Sigmoid colon (tissue), 7 donors: ENCODE measurements at regions of chr5 and their contacts with region 1.

Region 1: GRCh38 chr5:54243473-54244080 is 66.8 kb downstream of the ARL15 start:
- DNase-seq: no peak
- H3K4me3 ChIP-seq: no peak overlapping the region
- H3K27ac ChIP-seq: no peak overlapping the region
- H3K4me1 ChIP-seq: no peaks in the 10 kb centered on the region
- H3K27me3 ChIP-seq: no peaks in the 10 kb centered on the region
- CTCF ChIP-seq: peak in 3 of 4 experiments; percentile 31 to 52 (median 48)
- EP300 ChIP-seq: no peak
- POLR2A ChIP-seq: no peak

Region 2: GRCh38 chr5:54171645-54172384 is 71.8 kb before region 1 on chr5:
- intact Hi-C with region 1: no loop called
- DNase-seq: no peak
- H3K4me3 ChIP-seq: no peak overlapping the region
- H3K27ac ChIP-seq: no peak overlapping the region
- H3K4me1 ChIP-seq: no peaks in the 10 kb centered on the region
- H3K27me3 ChIP-seq: no peaks in the 10 kb centered on the region
- CTCF ChIP-seq: no peak
- EP300 ChIP-seq: no peak
- POLR2A ChIP-seq: no peak

Region 3: GRCh38 chr5:54186912-54187445 is 56.6 kb before region 1 on chr5:
- intact Hi-C with region 1: no loop called
- DNase-seq: no peak
- H3K4me3 ChIP-seq: no peak overlapping the region
- H3K27ac ChIP-seq: no peak overlapping the region
- H3K4me1 ChIP-seq: peaks cover 0 to 19% (median 0%) of the 10 kb centered on the region in 4 donors
- H3K27me3 ChIP-seq: no peaks in the 10 kb centered on the region
- CTCF ChIP-seq: no peak
- EP300 ChIP-seq: no peak
- POLR2A ChIP-seq: no peak

Region 4: DNA sequence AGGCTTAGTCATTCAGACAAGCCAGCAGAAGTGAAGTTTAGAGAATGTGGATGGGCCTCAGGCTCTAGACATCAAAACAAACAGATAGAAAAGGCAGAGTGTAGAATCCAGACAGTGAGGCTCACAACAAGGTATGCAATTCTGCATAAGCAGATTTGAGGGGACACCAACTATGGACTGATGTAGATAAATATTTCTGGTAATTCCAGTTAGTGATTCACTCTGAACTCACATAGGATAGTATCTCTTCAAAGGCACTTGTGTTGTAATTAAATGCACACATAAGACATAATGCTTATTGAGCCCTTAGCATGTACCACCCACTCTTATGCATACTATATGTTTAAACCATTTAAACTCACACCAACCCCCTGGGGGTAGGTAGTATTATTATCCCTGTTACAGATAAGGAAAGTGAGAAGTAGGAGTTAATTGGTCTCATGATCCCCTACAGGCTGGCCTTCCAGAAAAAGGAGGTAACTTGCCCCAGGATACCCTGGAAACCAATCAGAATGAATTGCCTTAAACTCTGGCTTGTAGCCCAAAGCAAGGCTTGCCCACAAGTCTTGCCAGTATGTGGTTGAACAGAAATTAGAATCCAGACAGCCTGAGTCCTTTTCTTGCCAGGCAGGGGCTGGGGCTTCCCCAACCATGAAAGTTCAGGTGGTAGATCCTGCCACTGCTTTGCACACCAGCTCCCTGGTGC is 172.5 kb after region 1 on chr5:
- intact Hi-C with region 1: loop called (anchors 5 kb)
- DNase-seq: no peak
- H3K4me3 ChIP-seq: no peak overlapping the region
- H3K27ac ChIP-seq: no peak overlapping the region
- H3K4me1 ChIP-seq: no peaks in the 10 kb centered on the region
- H3K27me3 ChIP-seq: no peaks in the 10 kb centered on the region
- CTCF ChIP-seq: no peak
- EP300 ChIP-seq: no peak
- POLR2A ChIP-seq: no peak

Region 5: DNA sequence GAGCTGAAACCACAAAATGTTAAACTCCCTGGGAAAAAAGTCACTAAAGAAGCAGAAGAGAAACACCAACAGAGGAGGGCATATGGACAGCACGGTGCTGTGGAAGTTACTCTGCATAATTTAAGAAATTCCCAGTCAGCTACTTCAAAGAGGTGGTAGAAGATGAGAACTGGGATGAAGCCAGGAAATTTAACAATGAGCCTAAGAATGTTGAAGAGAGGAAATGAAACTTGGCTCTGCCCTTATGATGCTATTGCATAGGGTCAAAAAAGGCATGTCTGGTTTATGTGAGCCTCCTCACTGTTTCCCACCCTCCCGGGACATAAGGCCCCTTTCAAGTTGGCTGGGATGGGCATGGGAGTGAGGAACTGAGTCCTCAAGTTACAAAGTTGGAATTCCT is 248.6 kb after region 1 on chr5:
- intact Hi-C with region 1: loop called (anchors 5 kb)
- DNase-seq: no peak
- H3K4me3 ChIP-seq: no peak overlapping the region
- H3K27ac ChIP-seq: no peak overlapping the region
- H3K4me1 ChIP-seq: no peaks in the 10 kb centered on the region
- H3K27me3 ChIP-seq: no peaks in the 10 kb centered on the region
- CTCF ChIP-seq: no peak
- EP300 ChIP-seq: no peak
- POLR2A ChIP-seq: no peak